ENCODE measurements at regions of chr1 and their contacts with region 1.

Region 1: DNA sequence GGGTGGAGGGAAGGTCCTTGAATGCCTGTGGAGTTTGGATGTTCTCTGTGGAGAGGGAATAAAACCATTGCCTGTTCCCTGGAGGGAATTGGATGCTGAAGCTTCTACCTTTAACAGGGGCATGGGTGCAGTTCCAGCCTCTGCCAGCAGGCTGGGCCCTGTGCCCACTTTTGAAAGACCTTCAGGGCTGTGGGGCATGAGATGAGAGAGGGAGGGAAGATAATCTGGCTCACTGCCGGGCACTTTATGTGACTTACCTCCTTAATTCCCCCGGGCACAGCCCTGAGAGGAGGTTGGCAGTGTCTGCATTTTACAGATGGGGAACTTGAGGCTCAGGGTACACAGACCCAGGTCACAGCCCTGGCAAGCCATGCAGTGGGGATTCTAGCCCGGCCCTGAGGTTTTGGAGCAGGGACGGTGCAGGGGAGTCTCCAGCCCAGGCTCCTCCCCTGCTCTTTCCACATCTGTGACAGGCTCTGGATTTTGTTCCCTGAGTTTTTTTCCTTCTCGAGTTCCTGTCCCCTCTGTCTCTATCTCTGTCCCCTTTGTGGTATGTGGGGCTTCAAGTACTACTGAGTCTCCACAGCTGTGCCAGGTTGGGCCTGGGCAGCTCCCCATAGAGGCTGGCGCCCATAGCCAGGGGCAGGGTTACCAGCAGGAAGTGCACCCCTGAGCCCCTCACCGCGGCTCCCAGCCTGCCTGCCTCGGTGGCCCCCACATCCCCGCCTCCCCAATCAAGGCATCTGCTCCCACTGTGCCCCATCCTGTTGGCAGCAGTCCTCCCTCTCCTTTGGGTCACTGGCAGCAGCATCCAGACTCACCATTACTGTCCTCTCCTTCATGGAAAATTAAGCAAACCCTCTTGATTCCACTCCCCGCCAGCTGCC is 14.0 kb upstream of the THEMIS2 start:
- DNase-seq: peak; percentile 53 to 93 (median 89)
- H3K4me3 ChIP-seq: peak overlapping the region in 15 of 59 donors; percentile 1 to 47 (median 27)
- H3K27ac ChIP-seq: peak overlapping the region in 11 of 59 donors; percentile 9 to 59 (median 41)
- H3K27me3 ChIP-seq: no peaks in the 10 kb centered on the region
- CTCF ChIP-seq: peak; percentile 76 to 98 (median 94)

Region 2: GRCh38 chr1:27971674-27972073 is 113.4 kb after region 1 on chr1:
- intact Hi-C with region 1: loop called in 1 of 2 experiments (anchors 2 kb)
- DNase-seq: no peak
- H3K4me3 ChIP-seq: no peak overlapping the region
- H3K27ac ChIP-seq: peak overlapping the region in 57 of 59 donors; percentile 43 to 94 (median 82)
- H3K27me3 ChIP-seq: no peaks in the 10 kb centered on the region
- CTCF ChIP-seq: no peak

Region 3: DNA sequence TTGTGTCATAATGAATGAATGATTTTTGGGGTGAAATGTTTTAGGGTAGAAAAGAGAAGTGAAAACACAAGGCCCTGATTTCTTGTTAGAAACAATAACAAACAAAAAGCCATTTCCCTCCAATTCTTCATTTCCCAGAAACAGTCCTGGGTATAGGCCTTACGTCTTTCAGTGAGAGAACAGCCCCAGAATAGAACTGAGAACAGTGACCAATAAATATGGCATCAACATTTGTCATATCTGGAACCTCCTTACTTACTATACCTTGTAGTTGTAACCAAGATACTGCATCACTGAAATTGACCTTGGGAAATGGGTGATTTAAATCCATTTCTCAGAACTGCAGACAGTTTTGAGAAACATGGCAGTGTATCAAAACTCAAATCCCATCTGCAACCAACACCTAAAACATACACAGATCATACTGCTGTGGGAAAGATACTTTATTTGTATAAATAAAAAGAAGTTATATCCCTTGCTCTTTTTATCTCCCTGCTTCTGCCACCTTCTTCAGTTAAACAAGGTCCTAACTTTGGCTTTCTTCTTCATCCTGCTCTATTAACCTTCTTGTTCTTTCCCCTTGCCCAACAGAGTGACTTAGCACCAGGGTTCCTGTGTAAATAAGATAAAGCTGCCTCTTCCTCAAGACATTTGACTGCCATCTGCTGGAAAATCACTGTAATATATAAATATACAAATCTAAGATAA is 121.0 kb after region 1 on chr1:
- intact Hi-C with region 1: loop called (anchors 2 kb)
- DNase-seq: no peak
- H3K4me3 ChIP-seq: no peak overlapping the region
- H3K27ac ChIP-seq: peak overlapping the region in 47 of 59 donors; percentile 5 to 83 (median 48)
- H3K27me3 ChIP-seq: no peaks in the 10 kb centered on the region
- CTCF ChIP-seq: peak; percentile 45 to 84 (median 68)